Activated naive CD4-positive, alpha-beta T cell treated with anti-CD3 and anti-CD28 coated beads for 36 hours (primary cell): ENCODE measurements at regions of chr1 and their contacts with region 1.

Region 1: DNA sequence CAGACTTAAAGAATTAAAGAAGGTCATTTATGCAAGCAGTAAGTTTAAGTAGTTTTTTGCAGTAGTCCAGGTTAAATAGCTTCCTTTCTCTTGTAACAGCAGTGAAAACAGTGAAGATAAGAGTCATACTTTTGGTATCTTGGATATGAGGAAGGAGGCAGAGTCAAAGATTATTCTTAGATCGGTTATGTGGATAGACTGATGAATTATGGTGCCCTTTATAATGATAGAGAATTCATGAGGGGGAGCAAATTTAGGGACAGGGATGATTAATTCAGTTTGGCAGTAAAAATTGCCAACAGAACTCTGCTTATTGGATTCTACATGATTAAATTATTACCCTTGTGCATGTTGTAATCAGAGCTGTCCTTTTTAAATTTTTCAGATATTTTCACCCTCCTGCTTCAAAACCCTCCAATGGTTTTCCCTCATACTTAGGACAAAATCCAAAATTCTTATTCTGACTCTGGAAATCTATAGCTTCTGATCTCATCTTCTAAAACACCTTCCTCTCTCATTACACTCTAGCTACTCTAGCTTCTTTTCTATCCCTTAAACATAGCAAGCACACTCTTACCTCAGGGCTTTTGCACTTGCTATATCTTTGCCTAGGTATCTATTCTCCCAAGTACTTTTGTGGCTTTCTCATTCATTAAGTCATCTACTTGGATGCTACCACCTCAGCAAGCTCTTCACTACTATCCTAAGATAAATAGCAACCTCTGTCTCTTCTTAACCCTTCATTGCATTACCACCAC is 79.8 kb downstream of the PKN2 start:
- DNase-seq: no peak
- H3K4me3 Mint-ChIP-seq: no peak overlapping the region
- H3K27ac Mint-ChIP-seq: no peak overlapping the region
- H3K4me1 Mint-ChIP-seq: peaks cover 4% of the 10 kb centered on the region
- H3K27me3 Mint-ChIP-seq: no peaks in the 10 kb centered on the region

Region 2: DNA sequence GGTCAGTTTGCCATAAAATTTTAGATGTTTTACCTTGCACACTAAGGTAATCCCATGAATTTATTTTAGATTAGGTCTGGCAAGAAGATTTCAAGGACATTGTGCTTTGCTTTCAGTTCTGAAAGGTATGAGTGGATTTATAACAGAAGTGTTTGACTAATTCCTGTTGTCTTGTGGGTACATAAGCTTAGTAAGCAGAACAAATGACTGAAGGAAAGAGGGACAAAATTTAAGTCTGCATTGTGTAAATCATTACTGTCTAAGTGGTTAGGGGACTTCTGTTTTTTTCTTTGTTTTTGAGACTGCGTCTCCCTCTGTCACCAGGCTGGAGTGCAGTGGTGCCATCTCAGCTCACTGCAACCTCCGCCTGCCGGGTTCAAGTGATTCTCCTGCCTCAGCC is 19.7 kb before region 1 on chr1:
- CTCF ChIA-PET with region 1: no interaction called
- intact Hi-C with region 1: loop called (anchors 2 kb)
- DNase-seq: no peak
- H3K4me3 Mint-ChIP-seq: no peak overlapping the region
- H3K27ac Mint-ChIP-seq: no peak overlapping the region
- H3K4me1 Mint-ChIP-seq: peaks cover 3% of the 10 kb centered on the region
- H3K27me3 Mint-ChIP-seq: no peaks in the 10 kb centered on the region

Region 3: GRCh38 chr1:88867743-88868521 is 104.1 kb after region 1 on chr1:
- CTCF ChIA-PET with region 1: no interaction called
- intact Hi-C with region 1: no loop called
- DNase-seq: no peak
- H3K4me3 Mint-ChIP-seq: no peak overlapping the region
- H3K27ac Mint-ChIP-seq: peak overlapping the region; percentile 84
- H3K4me1 Mint-ChIP-seq: peaks cover 57% of the 10 kb centered on the region
- H3K27me3 Mint-ChIP-seq: no peaks in the 10 kb centered on the region